Mammary epithelial cell (primary cell): ENCODE measurements at regions of chr7 and their contacts with region 1.

Region 1: DNA sequence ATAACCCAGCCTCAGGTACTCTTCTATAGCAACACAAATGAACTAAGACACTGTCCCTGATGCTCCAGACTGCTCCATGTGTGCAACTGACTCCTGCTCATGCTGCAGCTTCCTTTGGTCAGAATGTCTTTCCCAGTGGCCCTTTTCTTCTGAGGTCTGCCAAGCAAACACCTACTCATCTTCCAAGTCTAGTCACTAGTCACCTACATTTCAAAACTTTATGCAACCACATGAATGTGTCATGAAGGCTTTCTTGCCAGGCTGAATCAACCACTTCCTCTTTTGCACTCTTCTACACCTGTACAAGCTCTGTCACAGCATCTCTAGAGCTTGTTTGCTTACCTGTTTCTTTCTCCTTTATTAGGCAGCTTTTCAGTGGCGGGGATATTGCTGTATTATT is 75.8 kb downstream of the LSMEM1 start:
- DNase-seq: peak; percentile 93
- H3K4me3 ChIP-seq: no peak overlapping the region
- H3K27ac ChIP-seq: no peak overlapping the region
- H3K4me1 ChIP-seq: peaks cover 6% of the 10 kb centered on the region
- H3K27me3 ChIP-seq: no peaks in the 10 kb centered on the region
- CTCF ChIP-seq: no peak

Region 2: DNA sequence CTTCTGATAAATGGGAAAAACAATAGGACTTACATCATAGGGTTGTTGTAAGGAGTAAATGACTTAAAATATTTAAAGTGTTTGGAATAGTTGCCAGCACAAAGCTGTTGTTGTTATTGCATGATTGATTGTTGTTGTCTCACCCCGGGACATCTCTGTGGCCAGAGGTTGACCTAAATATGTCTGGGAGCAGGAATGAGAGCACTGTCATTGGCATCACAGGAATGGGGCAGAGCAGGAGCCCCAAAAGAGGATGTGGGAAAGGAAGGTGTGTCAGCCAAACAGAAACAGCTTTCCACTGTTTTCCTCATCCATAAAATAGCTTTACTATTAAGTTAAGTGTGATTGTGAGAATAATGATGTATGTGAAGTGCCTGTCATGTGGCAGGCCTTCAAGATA is 111.9 kb after region 1 on chr7:
- CTCF ChIA-PET with region 1: no interaction called
- dilution Hi-C with region 1: no loop called
- in situ Hi-C with region 1: no loop called
- intact Hi-C with region 1: no loop called
- DNase-seq: peak; percentile 52
- H3K4me3 ChIP-seq: no peak overlapping the region
- H3K27ac ChIP-seq: no peak overlapping the region
- H3K4me1 ChIP-seq: peaks cover 9% of the 10 kb centered on the region
- H3K27me3 ChIP-seq: no peaks in the 10 kb centered on the region
- CTCF ChIP-seq: no peak

Region 3: DNA sequence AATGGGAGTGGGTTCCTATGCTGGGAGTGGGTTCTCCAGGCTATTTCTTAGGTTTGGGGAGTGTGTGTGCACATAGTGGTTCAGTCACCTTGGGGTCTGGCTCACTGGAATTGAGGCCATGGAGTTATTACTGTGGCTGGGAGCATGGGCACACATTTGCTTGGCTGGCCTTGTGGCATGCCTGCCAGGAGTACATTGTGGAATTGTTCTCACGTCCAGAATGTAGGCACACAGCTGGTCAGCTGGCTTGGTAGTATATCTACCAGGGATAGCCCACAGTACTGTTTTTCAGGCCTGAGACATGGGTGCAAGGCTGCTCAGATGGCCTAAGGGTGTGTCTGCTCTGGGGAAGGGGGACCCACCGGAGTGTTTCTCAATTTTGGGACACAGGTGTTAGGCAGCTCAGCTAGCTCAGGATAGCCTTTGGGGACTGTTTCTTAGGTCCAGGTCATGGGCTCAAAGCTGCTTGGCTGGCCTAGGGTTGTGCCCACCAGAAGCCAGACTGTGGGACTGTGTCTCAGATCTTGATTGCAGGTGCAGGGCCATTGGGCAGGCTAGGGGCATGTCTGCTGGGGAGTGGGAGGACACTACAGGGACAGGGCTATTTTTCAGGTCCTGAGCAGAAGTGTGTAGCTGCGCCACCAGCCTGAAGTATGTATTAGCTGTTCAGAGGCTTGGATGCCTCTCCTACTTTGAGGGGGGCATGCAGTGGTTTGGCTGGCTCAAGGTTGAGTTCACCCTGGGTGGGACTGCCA is 183.0 kb after region 1 on chr7:
- CTCF ChIA-PET with region 1: no interaction called
- dilution Hi-C with region 1: no loop called
- in situ Hi-C with region 1: no loop called
- intact Hi-C with region 1: no loop called
- DNase-seq: no peak
- H3K4me3 ChIP-seq: no peak overlapping the region
- H3K27ac ChIP-seq: no peak overlapping the region
- H3K4me1 ChIP-seq: no peaks in the 10 kb centered on the region
- H3K27me3 ChIP-seq: no peaks in the 10 kb centered on the region
- CTCF ChIP-seq: no peak

Region 4: GRCh38 chr7:112789817-112790585 is 233.4 kb after region 1 on chr7 and contains the start of gene TMEM168:
- CTCF ChIA-PET with region 1: no interaction called
- dilution Hi-C with region 1: no loop called
- in situ Hi-C with region 1: no loop called
- intact Hi-C with region 1: loop called (anchors 5 kb)
- DNase-seq: peak; percentile 85
- H3K4me3 ChIP-seq: peak within 1 kb of the TSS; percentile 56 to 90 (median 69)
- H3K27ac ChIP-seq: peak within 1 kb of the TSS; percentile 53
- H3K4me1 ChIP-seq: peaks cover 16% of the 10 kb centered on the region
- H3K27me3 ChIP-seq: no peaks in the 10 kb centered on the region
- CTCF ChIP-seq: no peak
- total RNA-seq, gene TMEM168: 21.6 to 33.8 TPM

Region 5: GRCh38 chr7:113628948-113629847 is 1072.6 kb after region 1 on chr7:
- CTCF ChIA-PET with region 1: no interaction called
- dilution Hi-C with region 1: no loop called
- in situ Hi-C with region 1: no loop called
- intact Hi-C with region 1: no loop called
- DNase-seq: peak; percentile 79
- H3K4me3 ChIP-seq: no peak overlapping the region
- H3K27ac ChIP-seq: peak overlapping the region; percentile 28
- H3K4me1 ChIP-seq: peaks cover 16% of the 10 kb centered on the region
- H3K27me3 ChIP-seq: no peaks in the 10 kb centered on the region
- CTCF ChIP-seq: no peak

Region 6: DNA sequence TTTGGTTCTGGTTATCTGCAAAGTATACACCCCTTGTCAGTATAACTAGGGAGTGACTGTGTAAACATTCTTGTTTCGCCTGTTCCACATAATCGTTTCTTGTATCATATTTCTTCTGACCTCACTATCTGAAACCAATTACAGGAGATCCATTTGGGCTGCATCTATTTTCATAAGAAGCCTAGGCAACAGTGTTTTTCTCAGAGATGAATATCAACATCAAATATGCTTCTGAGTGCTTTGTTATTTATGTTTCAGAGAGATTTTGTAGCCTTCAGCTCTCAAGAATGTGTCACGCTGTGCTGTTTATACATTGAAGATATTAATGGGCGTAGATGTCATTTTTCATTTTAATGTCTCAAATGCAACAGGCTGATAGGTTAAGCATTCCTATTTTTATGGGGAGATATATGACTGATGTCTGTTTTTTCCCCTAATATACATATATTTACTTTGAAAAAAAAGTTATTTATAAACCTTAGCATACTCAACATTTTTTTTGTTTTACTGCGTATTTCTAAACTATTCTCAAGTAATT is 1973.5 kb after region 1 on chr7:
- CTCF ChIA-PET with region 1: no interaction called
- dilution Hi-C with region 1: no loop called
- in situ Hi-C with region 1: no loop called
- intact Hi-C with region 1: no loop called
- DNase-seq: no peak
- H3K4me3 ChIP-seq: no peak overlapping the region
- H3K27ac ChIP-seq: no peak overlapping the region
- H3K4me1 ChIP-seq: no peaks in the 10 kb centered on the region
- H3K27me3 ChIP-seq: no peaks in the 10 kb centered on the region
- CTCF ChIP-seq: no peak